HEK293 (cell line): ENCODE measurements at regions of chr9 and their contacts with region 1.

Region 1: DNA sequence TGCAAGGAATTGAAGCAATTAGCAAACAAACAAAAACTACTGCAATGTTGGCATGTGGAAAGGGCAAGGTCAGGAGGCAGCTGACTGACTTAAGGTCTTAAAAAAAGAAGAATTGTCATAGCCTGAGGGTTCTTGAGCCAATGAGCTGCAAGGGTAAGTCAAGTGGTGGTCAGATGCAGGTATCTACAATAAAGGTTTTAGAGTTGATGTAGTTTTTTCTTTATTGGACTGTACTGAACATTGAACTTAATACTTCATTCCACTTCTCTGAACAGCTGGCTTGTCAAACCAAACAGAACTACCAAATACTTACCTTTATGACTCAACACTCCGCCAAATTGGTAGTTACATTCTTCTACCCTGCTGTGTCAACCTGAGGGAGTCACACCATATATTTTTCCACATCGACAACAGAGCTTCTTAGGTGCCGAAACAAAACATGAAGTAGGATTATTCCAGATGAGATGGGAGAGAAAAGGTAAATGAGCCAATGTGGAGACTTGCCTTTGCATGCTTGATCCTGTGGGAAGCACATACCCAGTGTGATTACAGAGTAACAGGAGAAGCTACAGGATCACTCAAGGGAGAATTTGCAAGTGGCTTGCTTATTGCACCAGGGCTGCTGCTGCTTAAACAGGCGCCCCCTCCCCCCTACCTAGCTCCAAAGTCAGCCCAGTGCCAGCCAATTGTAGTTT is 35.3 kb downstream of the EQTN start:
- H3K4me3 ChIP-seq: no peak overlapping the region
- H3K27ac ChIP-seq: no peak overlapping the region
- H3K4me1 ChIP-seq: no peaks in the 10 kb centered on the region
- CTCF ChIP-seq: no peak

Region 2: GRCh38 chr9:27179245-27179865 is 82.3 kb before region 1 on chr9:
- CTCF ChIA-PET with region 1: no interaction called
- POLR2A ChIA-PET with region 1: no interaction called
- H3K4me3 ChIP-seq: no peak overlapping the region
- H3K27ac ChIP-seq: no peak overlapping the region
- H3K4me1 ChIP-seq: no peaks in the 10 kb centered on the region
- CTCF ChIP-seq: no peak

Region 3: GRCh38 chr9:27247756-27248155 is 13.9 kb before region 1 on chr9:
- CTCF ChIA-PET with region 1: interaction called, 25 read pairs
- POLR2A ChIA-PET with region 1: interaction called, 3 read pairs
- H3K4me3 ChIP-seq: no peak overlapping the region
- H3K27ac ChIP-seq: no peak overlapping the region
- H3K4me1 ChIP-seq: no peaks in the 10 kb centered on the region
- CTCF ChIP-seq: 0 out of 2 replicates have a peak, but pooled peaks have one; percentile 21

Region 4: DNA sequence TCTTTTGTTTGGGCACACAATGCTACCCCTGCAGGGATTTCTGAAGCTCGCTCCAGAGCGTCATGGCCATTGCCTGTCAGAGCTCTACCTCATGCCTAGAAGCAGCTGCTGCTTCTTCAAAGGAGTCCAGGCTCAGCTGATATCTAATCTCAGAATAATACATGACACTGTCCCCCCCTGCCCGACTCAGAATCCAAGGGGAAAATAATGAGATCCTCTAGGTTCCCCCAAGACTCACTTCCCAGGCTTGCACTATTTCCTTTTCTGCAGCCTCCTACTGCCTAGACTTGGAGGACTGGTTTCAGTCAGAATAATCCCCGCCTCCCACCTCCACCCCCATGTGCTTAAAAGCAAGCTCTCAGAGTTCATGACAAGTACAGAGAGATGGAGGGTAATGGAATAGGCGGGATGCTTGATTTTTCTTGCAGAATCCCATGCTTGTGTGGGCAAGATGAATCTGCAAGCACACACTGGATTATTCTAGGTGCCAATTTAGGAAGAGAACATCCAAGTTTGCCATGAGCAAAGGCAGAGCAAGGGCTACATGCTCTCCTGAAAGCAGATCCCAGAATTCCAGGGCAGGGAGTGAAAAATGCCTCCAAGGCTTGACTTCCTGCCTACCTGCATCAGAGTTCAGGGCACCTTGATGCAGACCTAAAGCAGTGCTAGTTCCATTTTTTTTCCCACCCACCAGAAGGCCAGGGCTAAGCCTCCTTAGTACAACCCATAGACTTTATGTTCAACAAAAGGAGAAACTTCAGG is 165.0 kb after region 1 on chr9:
- CTCF ChIA-PET with region 1: no interaction called
- POLR2A ChIA-PET with region 1: no interaction called
- H3K4me3 ChIP-seq: no peak overlapping the region
- H3K27ac ChIP-seq: no peak overlapping the region
- H3K4me1 ChIP-seq: peaks cover 15% of the 10 kb centered on the region; the same call in 1 of the 2 replicates
- CTCF ChIP-seq: no peak